ENCODE measurements at regions of chr18 and their contacts with region 1.

Region 1: GRCh38 chr18:14086458-14087231 is 45.6 kb downstream of the ZNF519 start:
- DNase-seq: no peak
- ATAC-seq: peak; percentile 10

Region 2: GRCh38 chr18:13823707-13824395 is 262.8 kb before region 1 on chr18 and contains the start of gene MC5R:
- intact Hi-C with region 1: loop called (anchors 2 kb)
- DNase-seq: peak; percentile 81
- ATAC-seq: peak; percentile 85
- total RNA-seq, gene MC5R: not detected